Posterior vena cava (tissue), 2 donors: ENCODE measurements at regions of chr20 and their contacts with region 1.

Region 1: GRCh38 chr20:5950271-5951031 is at the starts of genes MCM8 and TRMT6:
- DNase-seq: peak; percentile 99
- total RNA-seq, gene MCM8: 4.3 to 4.4 TPM
- total RNA-seq, gene TRMT6: 8.5 to 12.0 TPM

Region 2: DNA sequence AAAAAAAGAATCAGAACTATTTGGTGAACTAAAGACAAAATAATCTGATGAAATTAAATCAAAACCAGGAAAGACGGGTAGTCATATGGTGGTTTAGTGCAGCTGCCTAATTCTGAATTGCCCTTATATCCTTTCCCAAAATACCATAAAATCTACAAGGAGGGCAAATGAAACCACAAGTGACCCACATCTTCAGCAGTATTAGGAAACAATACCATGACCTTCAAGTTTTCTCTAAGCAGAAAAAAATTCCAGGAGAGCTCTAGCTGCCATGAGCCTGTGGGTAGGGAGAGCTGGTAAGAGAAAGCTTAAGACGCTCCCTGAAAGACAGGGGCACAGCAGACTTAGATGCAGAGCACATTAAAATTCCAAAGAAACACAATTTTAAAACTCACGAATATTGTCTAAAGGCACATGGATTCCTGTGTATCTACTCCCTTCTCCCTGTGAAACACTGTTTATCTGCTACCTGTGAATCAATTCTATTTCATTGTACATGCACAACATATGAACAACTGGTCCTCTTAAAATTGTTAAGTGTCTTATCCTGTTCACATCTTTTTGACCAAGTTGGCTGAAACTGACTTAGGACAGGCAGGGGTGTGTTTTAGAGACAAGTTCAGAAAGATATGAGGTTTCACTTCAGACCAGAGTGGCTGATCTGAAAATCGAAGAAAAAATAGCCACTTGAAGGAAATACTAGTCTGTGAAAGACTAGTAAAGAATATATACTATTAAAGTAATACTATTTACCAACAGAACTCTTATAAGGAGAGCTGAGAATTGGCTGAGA is 353.9 kb before region 1 on chr20:
- intact Hi-C with region 1: loop called in 1 of 2 experiments (anchors 5 kb)
- DNase-seq: no peak

Region 3: GRCh38 chr20:6074145-6074561 is 123.7 kb after region 1 on chr20:
- intact Hi-C with region 1: loop called in 1 of 2 experiments (anchors 5 kb)
- DNase-seq: no peak

Region 4: DNA sequence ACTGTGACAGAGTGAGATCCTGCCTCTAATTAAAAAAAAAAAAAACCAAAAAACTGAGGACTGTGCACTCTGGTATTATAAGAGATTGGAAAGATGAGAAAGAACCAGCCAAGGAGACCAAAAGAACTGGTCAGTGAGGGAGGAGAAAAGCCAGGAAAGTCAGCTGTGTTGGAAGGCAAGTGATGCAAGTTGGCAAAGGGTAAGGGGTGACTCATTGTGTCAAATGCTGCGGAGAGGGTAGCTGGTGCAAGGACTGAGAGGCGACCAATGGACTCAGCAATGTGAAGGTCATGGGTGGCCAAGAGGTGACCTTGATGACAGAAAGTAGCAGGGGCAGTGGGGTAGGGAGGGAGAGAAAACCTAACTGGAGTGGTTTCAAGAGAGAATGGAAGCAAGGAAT is 130.8 kb after region 1 on chr20:
- intact Hi-C with region 1: loop called (anchors 5 to 10 kb)
- DNase-seq: no peak